ENCODE measurements at regions of chr16 and their contacts with region 1.

Region 1: DNA sequence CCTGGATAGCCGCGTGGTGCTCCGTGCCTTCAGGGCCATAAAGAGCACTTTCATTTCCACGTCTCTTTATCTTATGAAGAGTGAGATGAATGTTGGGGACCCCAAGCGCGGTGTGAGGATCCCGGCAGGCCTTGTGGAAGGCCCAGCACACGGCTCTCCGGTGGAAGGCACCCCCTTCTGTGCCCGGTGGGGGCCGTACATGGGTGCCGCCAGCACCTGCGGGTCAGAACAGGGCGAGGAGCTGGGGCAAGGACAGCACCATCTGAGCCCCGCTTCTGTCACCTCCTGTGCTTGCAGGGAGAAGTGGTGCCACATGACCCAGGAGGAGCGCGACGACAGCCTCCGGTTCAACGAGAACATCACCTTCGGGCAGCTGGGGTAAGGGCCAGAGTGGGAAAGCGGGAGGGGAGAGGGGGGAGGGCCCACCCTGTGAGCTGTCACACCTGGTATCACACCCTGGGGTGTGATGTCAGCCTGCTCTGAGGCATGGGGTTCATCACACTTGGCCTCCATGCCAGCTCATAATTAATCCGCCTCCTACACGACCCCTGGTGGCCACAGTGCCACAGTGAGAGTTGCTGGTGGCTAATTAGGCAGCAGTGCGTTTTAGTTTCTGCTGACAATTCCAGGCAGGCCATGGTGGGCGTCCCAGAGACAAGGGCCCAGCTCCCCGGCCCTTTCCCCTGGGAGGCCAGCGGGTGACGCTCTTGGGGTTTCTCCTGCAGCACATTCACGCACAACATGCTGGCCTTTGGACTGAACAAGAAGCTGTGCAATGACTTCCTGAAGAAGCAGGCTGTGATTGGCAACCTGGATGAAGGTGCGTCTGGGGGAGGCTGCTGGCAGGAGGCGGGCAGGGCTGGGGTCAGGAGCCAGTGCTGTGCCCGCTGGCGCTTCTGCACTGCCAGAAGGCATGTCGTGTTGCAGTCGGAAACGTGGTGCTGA is 25.7 kb downstream of the CIBAR2 start:
- DNase-seq: peak; percentile 80 to 93 (median 89)
- ATAC-seq: peak; percentile 60 to 61
- H3K4me3 ChIP-seq: no peak overlapping the region
- H3K27ac ChIP-seq: no peak overlapping the region
- H3K4me1 ChIP-seq: peaks cover 6% of the 10 kb centered on the region
- H3K27me3 ChIP-seq: no peaks in the 10 kb centered on the region

Region 2: GRCh38 chr16:84854759-84855158 is 231.9 kb before region 1 on chr16:
- intact Hi-C with region 1: no loop called
- DNase-seq: peak in 1 of 3 donors; percentile 3
- ATAC-seq: peak in 1 of 2 donors; percentile 34
- H3K4me3 ChIP-seq: no peak overlapping the region
- H3K27ac ChIP-seq: no peak overlapping the region
- H3K4me1 ChIP-seq: no peaks in the 10 kb centered on the region
- H3K27me3 ChIP-seq: no peaks in the 10 kb centered on the region

Region 3: DNA sequence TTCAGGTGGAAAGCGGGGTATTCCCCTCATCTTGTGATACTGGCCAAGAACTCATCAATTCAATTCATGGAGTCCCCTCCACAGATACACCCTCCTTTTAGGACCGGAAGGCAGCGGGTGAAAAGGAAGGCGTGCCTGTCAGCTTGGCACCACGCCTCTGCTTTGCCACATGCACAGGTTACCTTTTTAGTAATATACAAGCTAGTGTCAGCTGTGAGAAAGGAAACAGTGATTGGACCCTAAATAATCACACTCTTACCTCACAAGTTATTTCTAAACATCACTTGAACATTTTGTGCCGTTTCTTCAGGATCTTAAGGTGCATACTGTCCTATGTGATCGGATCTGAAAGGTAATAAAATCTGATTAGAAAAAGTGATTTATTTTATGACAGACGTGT is 91.0 kb before region 1 on chr16:
- intact Hi-C with region 1: loop called in 1 of 4 experiments (anchors 10 kb)
- DNase-seq: no peak
- ATAC-seq: no peak
- H3K4me3 ChIP-seq: no peak overlapping the region
- H3K27ac ChIP-seq: no peak overlapping the region
- H3K4me1 ChIP-seq: peaks cover 2% of the 10 kb centered on the region
- H3K27me3 ChIP-seq: no peaks in the 10 kb centered on the region

Region 4: DNA sequence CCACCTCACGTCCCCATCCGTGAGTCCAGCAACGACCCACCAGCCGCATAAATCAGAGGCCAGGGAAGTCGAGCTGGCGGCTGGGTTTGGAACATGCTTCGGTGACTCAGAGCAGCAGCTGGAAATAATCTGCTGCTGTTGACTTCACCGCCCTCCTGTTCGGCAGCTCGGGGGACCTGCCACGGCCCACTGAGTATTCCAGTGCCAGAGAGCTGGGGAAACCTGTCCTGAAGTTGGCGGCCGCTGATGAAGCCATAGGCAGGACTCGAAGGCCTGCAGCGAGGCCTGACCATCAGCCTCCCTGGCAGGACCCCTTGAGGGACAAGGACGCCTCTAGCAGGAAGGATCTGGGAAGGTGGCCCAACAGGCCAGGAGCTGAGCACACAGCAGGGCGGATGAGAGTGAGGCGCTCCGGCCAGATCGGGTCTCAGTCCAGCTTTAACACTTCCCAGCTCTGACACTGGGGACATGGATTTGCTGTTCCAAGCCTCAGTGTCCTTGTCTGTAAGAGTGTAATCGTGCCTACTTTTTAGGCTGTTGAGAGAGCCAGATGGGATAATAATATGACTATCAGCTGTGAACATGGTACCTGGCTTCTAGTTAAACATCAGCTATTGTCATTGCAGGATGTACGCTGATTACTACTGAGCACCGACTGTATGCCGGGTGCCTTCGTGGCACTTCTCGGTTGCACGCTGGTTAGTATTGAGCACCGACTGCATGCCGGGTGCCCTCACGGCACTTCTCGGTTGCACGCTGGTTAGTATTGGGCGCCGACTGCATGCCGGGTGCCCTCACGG is 76.1 kb after region 1 on chr16:
- intact Hi-C with region 1: no loop called
- DNase-seq: peak; percentile 82 to 89 (median 86)
- ATAC-seq: peak; percentile 66 to 74
- H3K4me3 ChIP-seq: no peak overlapping the region
- H3K27ac ChIP-seq: peak overlapping the region; percentile 46
- H3K4me1 ChIP-seq: peaks cover 20% of the 10 kb centered on the region
- H3K27me3 ChIP-seq: no peaks in the 10 kb centered on the region

Region 5: DNA sequence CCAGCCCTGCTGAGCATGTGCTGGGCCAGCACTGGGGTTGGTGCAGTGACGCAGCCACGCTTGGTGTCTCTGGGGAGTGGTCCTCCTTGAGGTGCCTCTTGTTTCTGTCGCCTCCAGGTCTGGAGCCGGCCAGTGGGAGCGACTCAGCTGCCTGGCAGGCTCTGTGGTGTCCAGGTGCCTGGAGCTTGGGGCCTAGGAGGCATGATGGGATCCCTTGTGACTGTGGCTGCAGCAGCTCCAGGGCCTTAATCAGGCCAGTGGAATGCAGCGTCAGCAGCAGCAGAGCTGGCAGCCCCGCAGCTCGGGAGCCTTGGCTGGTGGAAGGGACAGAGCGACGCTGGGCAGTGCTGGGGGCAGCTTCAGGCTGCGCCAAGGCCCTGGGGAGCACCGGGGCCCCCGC is 100.4 kb after region 1 on chr16:
- intact Hi-C with region 1: no loop called
- DNase-seq: peak; percentile 54 to 79 (median 76)
- ATAC-seq: peak; percentile 81 to 87
- H3K4me3 ChIP-seq: no peak overlapping the region
- H3K27ac ChIP-seq: peak overlapping the region; percentile 38
- H3K4me1 ChIP-seq: no peaks in the 10 kb centered on the region
- H3K27me3 ChIP-seq: no peaks in the 10 kb centered on the region

Measured in right cardiac atrium (tissue), 5 donors.